GM10248 (cell line): ENCODE measurements at regions of chr6 and their contacts with region 1.

Region 1: DNA sequence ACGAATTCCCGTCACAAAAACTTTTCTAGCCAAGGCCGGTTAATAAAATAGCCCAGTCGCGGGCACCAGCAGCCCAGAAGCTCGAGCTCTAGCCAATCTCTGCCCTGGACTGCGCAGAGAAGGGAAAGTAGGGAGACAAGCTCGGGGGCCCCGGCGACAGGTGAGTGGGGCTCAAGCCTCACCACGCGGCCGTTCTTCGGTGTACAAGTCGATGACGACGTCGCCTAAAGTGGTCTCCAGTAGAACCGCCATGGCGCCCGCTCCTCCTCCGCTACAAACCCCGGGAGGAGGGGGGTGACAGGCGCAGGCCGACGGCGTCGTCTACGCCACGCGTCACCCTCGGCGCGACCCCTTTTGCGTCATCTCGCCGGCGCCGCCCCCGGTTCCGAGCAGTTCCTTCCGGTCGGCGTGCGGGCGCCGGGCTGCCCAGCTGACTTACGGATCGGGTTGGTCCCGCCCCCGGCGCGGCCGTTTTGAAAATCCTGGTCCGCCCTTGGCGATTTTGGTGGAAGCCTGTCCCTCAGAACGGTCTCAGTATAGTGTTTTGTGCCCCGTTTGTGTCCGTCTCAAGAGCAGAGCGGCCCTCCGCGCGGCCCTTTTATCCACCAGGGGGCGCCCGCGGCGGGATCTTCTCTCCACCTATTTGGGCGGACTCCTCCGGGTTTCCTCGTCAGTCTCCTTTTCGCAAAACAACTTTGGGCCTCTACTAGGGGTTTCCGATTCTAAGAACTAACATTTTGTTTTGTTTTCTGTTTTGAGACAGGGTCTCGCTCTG is at the start of gene PPIL4:
- DNase-seq: peak; percentile 96
- CTCF ChIP-seq: peak; percentile 64

Region 2: GRCh38 chr6:149473080-149474052 is 72.6 kb before region 1 on chr6:
- CTCF ChIA-PET with region 1: no interaction called
- POLR2A ChIA-PET with region 1: no interaction called
- DNase-seq: no peak
- CTCF ChIP-seq: peak; percentile 20

Region 3: DNA sequence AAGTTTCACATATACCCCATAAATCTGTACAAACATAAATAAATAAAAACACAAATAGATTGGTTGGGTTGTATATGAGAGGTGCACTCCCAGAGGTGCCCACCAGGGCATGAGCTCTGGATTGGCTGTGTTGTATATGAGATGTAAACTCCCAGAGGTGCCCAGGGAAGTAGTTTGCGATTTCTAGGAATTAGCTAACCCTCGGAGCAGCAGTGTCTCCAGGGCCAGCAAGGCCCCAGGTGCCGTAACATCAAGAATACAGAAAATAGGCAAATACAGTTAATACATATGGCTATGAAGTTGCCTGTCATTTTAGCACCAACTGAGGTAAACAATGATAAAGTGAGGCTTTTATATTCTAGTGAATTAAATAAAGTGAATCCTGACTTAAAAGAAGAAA is 14.8 kb after region 1 on chr6:
- CTCF ChIA-PET with region 1: interaction called, 52 read pairs
- POLR2A ChIA-PET with region 1: interaction called, 4 read pairs
- DNase-seq: no peak
- CTCF ChIP-seq: peak; percentile 12

Region 4: GRCh38 chr6:149565527-149566409 is 19.8 kb after region 1 on chr6 and contains the start of gene GINM1:
- CTCF ChIA-PET with region 1: interaction called, 52 read pairs
- POLR2A ChIA-PET with region 1: interaction called, 4 read pairs
- DNase-seq: peak; percentile 99
- CTCF ChIP-seq: peak; percentile 89

Region 5: DNA sequence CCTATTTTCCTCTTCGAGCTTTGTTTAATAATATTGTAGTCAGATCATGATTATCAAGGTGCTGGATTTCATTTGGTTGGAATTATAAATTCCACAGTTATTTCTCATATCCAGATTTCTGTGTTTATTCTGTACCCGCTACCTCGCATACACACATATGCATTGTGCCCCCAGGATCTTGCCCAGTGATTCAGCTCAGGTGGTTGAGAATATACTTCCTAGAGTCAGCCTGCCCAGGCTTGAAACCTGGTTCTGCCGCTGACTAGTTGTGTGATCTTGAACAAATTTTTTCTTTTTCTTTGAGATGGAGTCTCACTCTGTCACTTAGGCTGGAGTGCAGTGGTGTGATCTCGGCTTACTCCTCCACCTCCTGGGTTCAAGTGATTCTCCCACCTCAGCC is 34.9 kb after region 1 on chr6:
- CTCF ChIA-PET with region 1: interaction called, 10 read pairs
- POLR2A ChIA-PET with region 1: no interaction called
- DNase-seq: no peak
- CTCF ChIP-seq: no peak

Region 6: GRCh38 chr6:149593443-149593842 is 47.5 kb after region 1 on chr6:
- CTCF ChIA-PET with region 1: no interaction called
- POLR2A ChIA-PET with region 1: no interaction called
- DNase-seq: no peak
- CTCF ChIP-seq: no peak